Right ventricle myocardium superior (tissue), 1 donor: ENCODE measurements at regions of chr5 and their contacts with region 1.

Region 1: GRCh38 chr5:112757468-112758208 is 20.0 kb downstream of the APC start:
- DNase-seq: no peak
- ATAC-seq: peak; percentile 85

Region 2: DNA sequence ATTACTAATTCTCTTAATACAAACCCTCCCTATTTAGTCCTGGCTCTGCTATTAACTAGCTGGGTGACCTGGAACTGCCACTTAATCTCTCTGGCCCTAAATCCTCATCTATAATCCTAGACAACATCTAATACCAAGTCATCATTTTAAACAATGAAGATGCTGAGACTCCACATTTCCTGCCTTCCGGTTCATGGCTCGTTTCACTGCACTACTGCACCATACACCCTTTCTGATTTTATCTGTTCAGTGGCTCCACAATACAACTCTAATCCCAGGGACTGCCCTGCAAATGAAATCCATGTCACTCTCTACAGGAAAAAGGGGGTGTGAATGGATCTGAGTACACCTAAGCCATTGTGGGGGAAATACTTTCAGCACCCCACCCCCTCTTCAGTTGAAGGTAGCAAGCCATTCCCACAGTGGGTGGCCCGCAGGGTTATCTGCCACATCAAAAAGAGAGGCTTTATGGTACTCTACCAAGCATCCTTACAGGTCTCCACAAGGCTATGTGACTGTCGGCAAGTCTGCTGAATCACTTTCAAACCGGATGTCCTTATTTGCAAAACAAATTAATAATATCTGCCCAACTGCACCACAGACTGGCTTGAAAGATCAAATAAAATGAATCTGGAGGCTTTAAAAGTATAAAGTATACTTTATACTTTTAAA is 428.1 kb before region 1 on chr5:
- intact Hi-C with region 1: no loop called
- DNase-seq: no peak
- ATAC-seq: no peak

Region 3: DNA sequence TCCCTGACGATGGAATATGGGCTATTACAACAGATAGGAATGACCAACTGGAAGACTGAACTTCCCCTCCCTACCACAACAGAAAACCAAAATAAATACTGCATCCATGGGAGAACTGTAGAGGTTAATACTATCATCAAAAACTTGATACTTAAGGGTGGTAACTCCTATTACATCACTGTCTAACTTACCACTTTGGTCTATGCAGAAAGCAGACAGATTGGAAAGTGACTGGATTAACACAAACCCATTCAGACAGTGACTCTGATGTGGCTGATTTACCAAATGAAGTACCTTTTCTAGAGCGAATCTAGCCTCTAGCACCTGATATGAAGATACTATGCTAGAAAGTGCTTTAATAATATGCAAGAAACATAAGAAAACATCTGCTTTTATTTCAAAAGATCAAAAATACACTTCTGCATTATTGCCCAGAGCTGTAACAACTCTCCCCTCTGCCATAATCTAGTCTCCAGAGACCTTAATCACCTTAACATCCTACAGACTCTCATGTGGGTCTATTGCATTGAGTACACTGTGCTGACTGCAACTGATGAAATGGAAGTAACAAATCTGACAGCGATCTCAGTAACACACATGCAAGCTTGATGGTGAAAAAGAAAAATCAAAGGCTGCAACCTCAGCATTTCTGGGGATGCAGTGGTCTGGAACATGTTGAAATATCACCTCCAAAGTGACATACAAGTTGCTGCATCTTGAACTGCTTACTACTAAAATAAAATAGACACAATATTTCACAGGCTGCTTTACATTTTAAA is 401.3 kb before region 1 on chr5:
- intact Hi-C with region 1: no loop called
- DNase-seq: no peak
- ATAC-seq: no peak

Region 4: GRCh38 chr5:112551419-112552032 is 206.1 kb before region 1 on chr5:
- intact Hi-C with region 1: loop called (anchors 2 kb)
- DNase-seq: no peak
- ATAC-seq: peak; percentile 75

Region 5: GRCh38 chr5:113132564-113132963 is 374.9 kb after region 1 on chr5:
- intact Hi-C with region 1: no loop called
- DNase-seq: no peak
- ATAC-seq: peak; percentile 91